ENCODE measurements at regions of chr14 and their contacts with region 1.

Region 1: GRCh38 chr14:105369653-105370040 is 28.7 kb upstream of the TEX22 start:
- DNase-seq: no peak
- ATAC-seq: no peak
- H3K4me3 ChIP-seq: no peak overlapping the region
- H3K27ac ChIP-seq: no peak overlapping the region
- H3K4me1 ChIP-seq: no peaks in the 10 kb centered on the region
- H3K27me3 ChIP-seq: no peaks in the 10 kb centered on the region
- CTCF ChIP-seq: no peak
- POLR2A ChIP-seq: no peak

Region 2: GRCh38 chr14:105300792-105301533 is 68.7 kb before region 1 on chr14 and contains the start of gene BRF1:
- in situ Hi-C with region 1: no loop called
- intact Hi-C with region 1: no loop called
- DNase-seq: peak; percentile 96 to 97
- ATAC-seq: peak; percentile 91 to 94
- H3K4me3 ChIP-seq: peak within 1 kb of the TSS; percentile 69 to 97 (median 75)
- H3K27ac ChIP-seq: peak within 1 kb of the TSS; percentile 90 to 99 (median 94)
- H3K4me1 ChIP-seq: peaks cover 12 to 14% of the 10 kb centered on the region in 2 donors
- H3K27me3 ChIP-seq: no peaks in the 10 kb centered on the region
- CTCF ChIP-seq: no peak
- POLR2A ChIP-seq: peak; percentile 73 to 76
- total RNA-seq, gene BRF1: 19.5 to 27.4 (median 21.4) TPM

Region 3: DNA sequence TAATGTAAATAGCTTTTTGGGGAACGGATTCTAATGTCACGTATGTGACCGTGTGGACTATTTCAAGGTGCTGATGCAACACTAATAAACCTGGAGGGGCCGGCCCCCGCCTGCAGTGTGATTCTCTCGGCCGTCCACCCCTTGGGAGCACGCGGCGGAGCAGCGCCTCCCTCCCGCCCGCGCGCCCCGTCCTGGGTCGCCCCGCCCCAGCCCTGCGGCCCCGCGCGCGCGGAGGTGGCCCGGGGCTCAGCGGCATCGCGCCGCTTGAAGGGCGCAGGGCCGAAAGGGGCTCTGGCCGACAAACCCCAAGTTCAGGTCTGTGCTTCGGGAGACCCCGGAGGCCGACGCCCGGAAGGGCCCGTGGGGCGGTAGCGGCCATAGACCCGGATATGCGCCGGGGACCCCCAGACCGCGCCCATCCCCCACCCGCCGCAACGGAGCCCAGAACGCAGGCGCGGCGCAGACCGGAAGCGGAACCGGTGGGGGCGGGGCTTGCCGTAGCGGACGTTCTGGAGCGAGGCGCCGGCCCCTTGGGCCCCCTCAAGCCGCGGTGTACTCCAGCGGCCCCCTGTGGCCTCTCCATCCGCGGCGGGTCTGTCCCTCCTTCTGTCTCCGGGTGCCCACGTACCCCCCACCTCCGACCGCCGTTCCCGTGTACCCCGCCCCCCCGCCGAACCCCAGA is 28.5 kb after region 1 on chr14 and contains the start of gene TEX22:
- in situ Hi-C with region 1: no loop called
- intact Hi-C with region 1: loop called (anchors 2 kb)
- DNase-seq: peak; percentile 78 to 82
- ATAC-seq: peak; percentile 85 to 91
- H3K4me3 ChIP-seq: peak within 1 kb of the TSS; percentile 70 to 100 (median 94)
- H3K27ac ChIP-seq: peak within 1 kb of the TSS; percentile 79 to 94 (median 90)
- H3K4me1 ChIP-seq: peaks cover 17 to 19% of the 10 kb centered on the region in 2 donors
- H3K27me3 ChIP-seq: no peaks in the 10 kb centered on the region
- CTCF ChIP-seq: peak in 2 of 5 experiments; percentile 36 to 45
- POLR2A ChIP-seq: peak; percentile 66 to 81
- total RNA-seq, gene TEX22: not detected

Region 4: DNA sequence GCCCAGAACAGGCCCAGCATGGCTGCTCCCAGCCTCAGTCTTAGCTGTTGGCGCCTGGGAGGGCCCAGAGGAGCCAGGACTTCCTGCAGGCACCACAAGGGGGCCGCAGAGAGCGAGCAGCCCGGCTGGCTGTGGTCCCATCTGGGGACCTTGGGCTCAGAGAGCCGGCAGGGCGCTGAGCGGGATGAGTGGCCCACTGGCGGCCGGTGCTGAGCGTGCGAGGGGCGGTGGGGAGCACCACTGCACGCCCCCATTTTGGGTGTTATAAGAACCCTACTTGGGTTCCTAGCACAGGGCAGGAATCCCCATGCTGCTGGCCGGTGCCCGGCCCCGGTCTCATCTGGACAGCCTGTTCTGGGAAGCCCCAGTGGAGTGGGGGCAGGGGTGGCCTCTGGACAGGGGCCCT is 79.1 kb after region 1 on chr14:
- in situ Hi-C with region 1: no loop called
- intact Hi-C with region 1: loop called (anchors 2 kb)
- DNase-seq: peak; percentile 41 to 58
- ATAC-seq: peak; percentile 89 to 90
- H3K4me3 ChIP-seq: no peak overlapping the region
- H3K27ac ChIP-seq: no peak overlapping the region
- H3K4me1 ChIP-seq: peaks cover 2 to 9% of the 10 kb centered on the region in 2 donors
- H3K27me3 ChIP-seq: no peaks in the 10 kb centered on the region
- CTCF ChIP-seq: peak; percentile 69 to 94 (median 90)
- POLR2A ChIP-seq: no peak

Region 5: DNA sequence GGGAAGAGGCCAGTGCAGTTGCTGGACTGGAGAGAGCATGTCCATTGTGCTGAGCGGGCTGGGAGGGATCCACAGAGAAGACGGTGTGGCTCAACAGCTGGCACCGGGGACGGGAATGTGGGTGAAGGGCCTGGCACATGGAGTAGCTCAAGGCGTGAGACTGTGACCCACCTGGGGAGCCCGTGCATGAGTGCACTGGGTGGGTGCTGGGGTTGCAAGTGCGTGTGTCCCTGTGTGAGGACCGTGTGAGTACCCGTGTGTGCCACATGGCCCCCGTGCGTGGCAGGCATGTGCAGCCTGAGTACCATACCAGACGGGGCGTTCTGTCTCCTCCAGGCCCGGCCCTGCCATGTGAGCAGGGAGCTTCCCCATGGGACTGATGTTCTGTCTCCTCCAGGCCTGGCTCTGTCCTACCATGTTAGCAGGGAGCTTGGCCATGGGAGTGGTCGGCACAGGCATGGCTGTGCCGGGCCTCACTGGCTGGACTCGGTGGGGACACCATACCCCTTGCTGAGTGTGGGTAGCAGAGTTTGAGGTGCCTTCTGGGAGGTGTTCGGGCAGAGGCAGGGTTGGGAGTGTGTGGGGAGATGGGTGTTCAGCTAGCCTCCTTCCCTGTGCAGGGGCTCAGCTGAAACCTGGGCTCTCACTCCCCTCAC is 391.2 kb after region 1 on chr14:
- in situ Hi-C with region 1: no loop called
- intact Hi-C with region 1: no loop called
- DNase-seq: no peak
- ATAC-seq: no peak
- H3K4me3 ChIP-seq: no peak overlapping the region
- H3K27ac ChIP-seq: no peak overlapping the region
- H3K4me1 ChIP-seq: no peaks in the 10 kb centered on the region
- H3K27me3 ChIP-seq: no peaks in the 10 kb centered on the region
- CTCF ChIP-seq: no peak
- POLR2A ChIP-seq: no peak

Measured in gastrocnemius medialis (tissue), 4 donors.